Activated CD4-positive, alpha-beta memory T cell treated with anti-CD3 and anti-CD28 coated beads for 36 hours (primary cell): ENCODE measurements at regions of chr5 and their contacts with region 1.

Region 1: GRCh38 chr5:127564002-127564769 is 46.7 kb downstream of the PRRC1 start:
- DNase-seq: peak; percentile 38
- H3K4me3 Mint-ChIP-seq: no peak overlapping the region
- H3K27ac Mint-ChIP-seq: no peak overlapping the region
- H3K4me1 Mint-ChIP-seq: peaks cover 5% of the 10 kb centered on the region
- H3K27me3 Mint-ChIP-seq: peaks cover 26% of the 10 kb centered on the region

Region 2: DNA sequence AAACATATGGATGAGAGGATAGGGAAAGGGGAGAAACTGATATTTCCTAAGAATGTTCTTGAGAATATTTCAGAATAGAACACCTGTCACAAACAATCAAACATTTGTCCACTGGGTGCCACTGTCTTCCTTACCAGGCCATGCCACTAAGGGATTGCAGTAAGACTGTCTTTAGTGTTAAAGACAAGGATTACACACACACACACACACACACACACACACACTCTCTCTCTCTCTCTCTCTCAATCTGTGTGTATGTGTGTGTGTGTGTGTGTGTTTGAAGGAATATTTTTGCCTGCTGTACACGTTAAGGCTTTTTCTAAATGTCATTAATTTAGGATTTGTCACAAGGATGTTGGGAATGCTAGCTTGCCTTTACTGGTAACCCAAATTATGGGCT is 193.4 kb after region 1 on chr5:
- CTCF ChIA-PET with region 1: interaction called, 3 read pairs
- POLR2A ChIA-PET with region 1: no interaction called
- intact Hi-C with region 1: loop called (anchors 5 kb)
- DNase-seq: peak; percentile 37
- H3K4me3 Mint-ChIP-seq: no peak overlapping the region
- H3K27ac Mint-ChIP-seq: no peak overlapping the region
- H3K4me1 Mint-ChIP-seq: no peaks in the 10 kb centered on the region
- H3K27me3 Mint-ChIP-seq: no peaks in the 10 kb centered on the region

Region 3: GRCh38 chr5:127909078-127909477 is 344.9 kb after region 1 on chr5:
- CTCF ChIA-PET with region 1: interaction called, 4 read pairs
- POLR2A ChIA-PET with region 1: no interaction called
- intact Hi-C with region 1: loop called (anchors 10 kb)
- DNase-seq: peak; percentile 16
- H3K4me3 Mint-ChIP-seq: no peak overlapping the region
- H3K27ac Mint-ChIP-seq: no peak overlapping the region
- H3K4me1 Mint-ChIP-seq: peaks cover 3% of the 10 kb centered on the region
- H3K27me3 Mint-ChIP-seq: peaks cover 9% of the 10 kb centered on the region

Region 4: GRCh38 chr5:128201065-128201926 is 637.1 kb after region 1 on chr5:
- CTCF ChIA-PET with region 1: interaction called, 13 read pairs
- POLR2A ChIA-PET with region 1: no interaction called
- intact Hi-C with region 1: loop called (anchors 1 kb)
- DNase-seq: peak; percentile 89
- H3K4me3 Mint-ChIP-seq: no peak overlapping the region
- H3K27ac Mint-ChIP-seq: no peak overlapping the region
- H3K4me1 Mint-ChIP-seq: peaks cover 29% of the 10 kb centered on the region
- H3K27me3 Mint-ChIP-seq: peaks cover 7% of the 10 kb centered on the region

Region 5: DNA sequence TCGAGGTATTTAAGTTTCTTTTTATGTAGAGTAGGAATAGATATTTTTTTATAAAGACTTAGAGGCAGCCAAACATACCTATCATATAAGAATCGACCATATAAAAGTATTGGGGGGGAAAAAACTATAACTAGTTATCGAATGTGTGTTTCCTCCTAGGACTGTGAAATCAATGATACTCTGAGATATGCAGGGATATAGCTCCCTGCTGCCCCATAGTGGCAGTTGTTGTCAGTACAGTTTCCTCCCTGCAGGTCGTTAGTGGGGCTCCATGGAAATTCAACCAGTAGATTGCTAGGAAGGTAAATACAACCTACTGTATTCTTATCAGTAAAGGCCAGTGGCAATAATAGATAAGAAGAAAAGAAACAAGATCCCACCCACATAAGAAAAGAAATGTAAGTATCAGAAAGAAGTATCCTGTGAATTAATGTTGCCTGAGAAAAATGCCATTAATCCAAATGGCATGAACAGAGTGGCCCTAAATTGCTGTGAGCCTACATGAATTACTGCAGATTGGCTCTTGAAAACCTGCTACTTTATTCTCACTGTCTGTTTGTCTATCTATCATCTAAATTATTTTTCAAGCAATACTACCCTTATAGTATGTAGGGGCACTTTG is 1110.8 kb after region 1 on chr5:
- CTCF ChIA-PET with region 1: no interaction called
- POLR2A ChIA-PET with region 1: interaction called, 3 read pairs
- intact Hi-C with region 1: loop called (anchors 2 kb)
- DNase-seq: peak; percentile 53
- H3K4me3 Mint-ChIP-seq: no peak overlapping the region
- H3K27ac Mint-ChIP-seq: no peak overlapping the region
- H3K4me1 Mint-ChIP-seq: no peaks in the 10 kb centered on the region
- H3K27me3 Mint-ChIP-seq: peaks cover 3% of the 10 kb centered on the region

Region 6: DNA sequence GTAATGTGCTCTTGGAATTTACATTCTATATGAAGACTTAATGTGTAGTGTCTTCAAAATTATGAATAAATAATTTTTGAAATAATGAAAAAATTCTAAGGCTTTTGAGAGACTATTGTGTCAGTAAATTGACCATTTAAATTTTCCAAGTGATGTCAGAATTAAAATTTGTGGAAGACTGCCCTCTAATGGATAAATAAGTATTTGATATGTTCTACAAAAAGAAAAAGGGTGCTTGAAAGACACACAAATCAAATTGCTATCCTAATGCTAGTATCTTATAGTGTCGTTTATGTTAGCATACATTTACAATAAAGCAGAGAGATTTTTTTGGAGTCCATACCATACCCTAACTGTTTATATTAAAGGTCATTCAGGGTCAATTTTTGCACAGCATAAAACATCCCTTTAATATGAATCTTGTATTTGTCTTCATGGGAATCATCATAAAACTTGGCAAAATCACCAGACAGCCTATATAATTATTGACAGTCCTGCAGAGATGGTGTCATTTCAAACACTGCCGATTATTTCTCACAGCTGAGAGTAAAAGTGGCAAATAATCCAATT is 1280.3 kb after region 1 on chr5:
- CTCF ChIA-PET with region 1: no interaction called
- POLR2A ChIA-PET with region 1: no interaction called
- intact Hi-C with region 1: loop called (anchors 5 kb)
- DNase-seq: no peak
- H3K4me3 Mint-ChIP-seq: no peak overlapping the region
- H3K27ac Mint-ChIP-seq: no peak overlapping the region
- H3K4me1 Mint-ChIP-seq: no peaks in the 10 kb centered on the region
- H3K27me3 Mint-ChIP-seq: no peaks in the 10 kb centered on the region